AG04449 (cell line): ENCODE measurements at regions of chr3 and their contacts with region 1.

Region 1: GRCh38 chr3:35965908-35966307 is 326.6 kb downstream of the ARPP21 start:
- DNase-seq: no peak
- H3K4me3 ChIP-seq: no peak overlapping the region
- CTCF ChIP-seq: peak; percentile 37

Region 2: DNA sequence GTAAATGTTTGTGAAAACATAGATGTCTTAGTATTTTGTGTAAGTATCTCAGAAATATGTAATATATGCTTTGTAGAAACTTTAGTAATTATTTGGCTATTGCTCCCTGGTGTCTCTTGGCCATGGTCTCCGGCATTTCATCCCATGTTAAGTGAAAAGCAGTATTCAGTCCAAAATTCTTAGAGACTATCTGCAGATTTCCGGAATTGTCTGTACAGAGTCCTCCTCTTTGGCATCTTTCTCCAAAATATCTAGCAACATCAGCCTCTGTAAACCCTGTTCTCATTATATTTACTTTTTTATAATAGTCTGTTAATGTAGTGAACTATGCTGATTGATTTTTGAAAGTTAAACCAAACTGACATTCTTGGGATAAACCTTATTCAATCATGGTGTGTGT is 26.1 kb after region 1 on chr3:
- CTCF ChIA-PET with region 1: no interaction called
- POLR2A ChIA-PET with region 1: no interaction called
- DNase-seq: no peak
- H3K4me3 ChIP-seq: no peak overlapping the region
- CTCF ChIP-seq: no peak

Region 3: DNA sequence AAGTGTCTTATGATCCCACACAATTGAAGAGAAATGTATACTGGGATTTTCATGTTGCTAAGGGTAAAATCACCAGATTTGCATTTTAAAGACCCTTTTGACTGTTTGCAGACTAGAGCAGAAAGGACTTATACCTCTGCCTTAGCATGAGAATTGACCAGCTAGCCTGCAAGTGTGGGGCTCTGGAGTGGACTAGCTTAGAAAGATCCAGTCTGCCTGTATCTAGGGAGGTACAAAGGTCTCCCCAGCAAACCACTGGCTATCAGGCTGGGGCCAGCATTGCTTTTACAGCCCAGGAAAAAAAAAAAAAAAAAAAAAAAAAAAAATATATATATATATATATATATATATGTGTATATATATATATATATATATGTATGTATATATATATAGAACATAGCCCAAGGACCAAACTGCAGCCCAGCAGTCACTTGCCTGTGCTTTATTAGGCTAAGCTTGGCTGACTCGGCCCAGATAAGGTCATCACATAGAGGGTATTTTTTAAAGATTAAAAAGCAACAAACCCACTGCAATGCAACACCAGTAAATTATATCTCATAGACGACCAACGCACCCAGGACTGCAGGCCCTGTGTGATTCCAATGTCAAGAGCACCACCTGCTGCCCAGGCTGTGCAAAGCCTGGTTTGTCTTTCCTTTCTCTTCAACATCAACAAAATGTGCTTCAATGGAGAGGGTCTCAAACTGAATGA is 734.8 kb after region 1 on chr3:
- CTCF ChIA-PET with region 1: interaction called, 32 read pairs
- POLR2A ChIA-PET with region 1: no interaction called
- DNase-seq: no peak
- H3K4me3 ChIP-seq: no peak overlapping the region
- CTCF ChIP-seq: peak; percentile 92

Region 4: GRCh38 chr3:36707623-36708409 is 741.9 kb after region 1 on chr3:
- CTCF ChIA-PET with region 1: interaction called, 26 read pairs
- POLR2A ChIA-PET with region 1: no interaction called
- DNase-seq: peak; percentile 4
- H3K4me3 ChIP-seq: no peak overlapping the region
- CTCF ChIP-seq: peak; percentile 25